HEK293T (cell line): ENCODE measurements at regions of chr20 and their contacts with region 1.

Region 1: GRCh38 chr20:33992923-33993575 is 662 bp upstream of the RALY start:
- DNase-seq: peak; percentile 98

Region 2: GRCh38 chr20:33981964-33982363 is 11.1 kb before region 1 on chr20:
- CTCF ChIA-PET with region 1: no interaction called
- POLR2A ChIA-PET with region 1: interaction called, 22 read pairs
- DNase-seq: no peak

Region 3: GRCh38 chr20:34199183-34199582 is 206.1 kb after region 1 on chr20:
- CTCF ChIA-PET with region 1: no interaction called
- POLR2A ChIA-PET with region 1: no interaction called
- DNase-seq: no peak